HepG2 (cell line): ENCODE measurements at regions of chr3 and their contacts with region 1.

Region 1: GRCh38 chr3:77093101-77093500 is 53.2 kb downstream of the ROBO2 start:
- DNase-seq: no peak
- ATAC-seq: no peak
- H3K4me3 ChIP-seq: no peak overlapping the region
- H3K27ac ChIP-seq: no peak overlapping the region
- H3K4me1 ChIP-seq: no peaks in the 10 kb centered on the region
- H3K27me3 ChIP-seq: no peaks in the 10 kb centered on the region
- CTCF ChIP-seq: no peak
- EP300 ChIP-seq: no peak
- POLR2A ChIP-seq: no peak
- RAD21 ChIP-seq: no peak

Region 2: GRCh38 chr3:77588863-77589262 is 495.8 kb after region 1 on chr3:
- CTCF ChIA-PET with region 1: no interaction called
- POLR2A ChIA-PET with region 1: no interaction called
- in situ Hi-C with region 1: no loop called
- intact Hi-C with region 1: loop called (anchors 5 kb)
- DNase-seq: no peak
- ATAC-seq: no peak
- H3K4me3 ChIP-seq: no peak overlapping the region
- H3K27ac ChIP-seq: no peak overlapping the region
- H3K4me1 ChIP-seq: no peaks in the 10 kb centered on the region
- H3K27me3 ChIP-seq: no peaks in the 10 kb centered on the region
- CTCF ChIP-seq: no peak
- EP300 ChIP-seq: no peak
- POLR2A ChIP-seq: no peak
- RAD21 ChIP-seq: no peak